ENCODE measurements at regions of chr3 and their contacts with region 1.

Region 1: DNA sequence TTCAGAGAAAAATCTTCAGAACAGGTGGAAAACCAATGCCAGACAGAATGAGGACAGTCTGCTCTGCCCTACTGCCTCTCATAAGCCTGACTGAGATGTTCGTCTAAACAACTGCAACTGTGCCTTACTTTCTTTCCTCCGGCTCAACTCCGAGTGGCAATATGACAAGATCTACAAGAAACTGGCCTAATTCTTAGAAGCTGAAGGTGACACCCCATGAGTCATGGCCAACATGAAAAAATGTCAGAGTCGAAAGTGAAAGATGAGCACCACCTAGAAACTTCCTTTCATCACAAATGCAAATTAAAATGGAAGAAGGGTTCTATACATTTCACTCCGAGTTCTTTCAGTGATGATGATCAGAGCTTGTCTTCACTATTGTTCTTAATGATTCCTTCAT is 12.9 kb downstream of the PCYT1A start:
- ATAC-seq: peak in 2 of 8 experiments; percentile 71 to 83
- H3K4me3 ChIP-seq: no peak overlapping the region
- H3K27ac ChIP-seq: no peak overlapping the region
- H3K4me1 ChIP-seq: no peaks in the 10 kb centered on the region

Region 2: GRCh38 chr3:196432137-196432879 is 157.7 kb after region 1 on chr3 and contains the start of gene UBXN7:
- in situ Hi-C with region 1: loop called in 1 of 9 experiments (anchors 25 kb)
- ATAC-seq: peak; percentile 85 to 94 (median 91)
- H3K4me3 ChIP-seq: peak within 1 kb of the TSS; percentile 65 to 93 (median 88)
- H3K27ac ChIP-seq: peak within 1 kb of the TSS; percentile 90 to 95
- H3K4me1 ChIP-seq: peaks cover 0 to 4% of the 10 kb centered on the region in 2 donors
- total RNA-seq, gene UBXN7: 19.8 to 34.2 (median 25.6) TPM

Measured in motor neuron (in vitro differentiated cells).